A549 (cell line): ENCODE measurements at regions of chr13 and their contacts with region 1.

Region 1: GRCh38 chr13:77492982-77493381 is 42.5 kb upstream of the SCEL start:
- DNase-seq: peak in 1 of 2 experiments; percentile 42
- ATAC-seq: peak; percentile 62 to 76; a peak in 4 of 6 replicates
- H3K4me3 ChIP-seq: no peak overlapping the region
- H3K27ac ChIP-seq: no peak overlapping the region
- H3K4me1 ChIP-seq: no peaks in the 10 kb centered on the region
- CTCF ChIP-seq: peak; percentile 56
- EP300 ChIP-seq: no peak
- POLR2A ChIP-seq: no peak
- RAD21 ChIP-seq: peak; percentile 58 to 73

Region 2: DNA sequence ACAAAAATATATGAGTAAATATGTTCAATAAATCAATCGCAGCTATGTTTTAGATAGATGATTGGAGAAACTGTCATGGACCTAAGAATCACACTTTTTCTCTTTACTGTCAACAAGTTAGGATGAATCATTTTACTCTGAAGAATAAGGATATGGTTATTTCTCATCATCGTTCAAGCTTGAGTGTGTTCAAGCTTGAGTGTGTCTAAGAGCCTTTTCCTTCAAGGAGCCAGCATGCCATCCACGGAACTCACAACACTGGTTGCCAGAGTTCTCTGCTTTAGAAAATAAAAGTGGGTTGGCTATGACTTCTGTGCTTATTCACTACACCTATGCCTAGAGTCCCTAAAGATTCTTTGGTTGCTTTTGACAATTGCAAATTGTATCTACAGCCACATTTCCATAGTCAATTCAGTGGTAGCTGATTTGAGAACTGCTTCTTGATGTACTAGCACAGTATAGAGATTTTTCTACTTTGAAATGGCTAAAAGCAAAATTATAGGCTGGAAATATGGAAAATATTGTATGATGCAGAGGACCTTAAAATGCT is 15.6 kb before region 1 on chr13:
- CTCF ChIA-PET with region 1: interaction called, 13 read pairs
- POLR2A ChIA-PET with region 1: no interaction called
- DNase-seq: no peak
- ATAC-seq: no peak
- H3K4me3 ChIP-seq: no peak overlapping the region
- H3K27ac ChIP-seq: peak overlapping the region; percentile 81 to 91; a peak in 5 of 6 replicates
- H3K4me1 ChIP-seq: no peaks in the 10 kb centered on the region
- CTCF ChIP-seq: no peak
- EP300 ChIP-seq: no peak
- POLR2A ChIP-seq: no peak
- RAD21 ChIP-seq: no peak

Region 3: GRCh38 chr13:77565635-77566034 is 72.7 kb after region 1 on chr13:
- CTCF ChIA-PET with region 1: interaction called, 31 read pairs
- POLR2A ChIA-PET with region 1: no interaction called
- DNase-seq: peak; percentile 4 to 38
- ATAC-seq: peak; percentile 50 to 75; a peak in 3 of 6 replicates
- H3K4me3 ChIP-seq: no peak overlapping the region
- H3K27ac ChIP-seq: no peak overlapping the region
- H3K4me1 ChIP-seq: no peaks in the 10 kb centered on the region
- CTCF ChIP-seq: peak; percentile 60
- EP300 ChIP-seq: no peak
- POLR2A ChIP-seq: no peak
- RAD21 ChIP-seq: peak; percentile 78 to 79